ENCODE measurements at regions of chrX and their contacts with region 1.

Region 1: DNA sequence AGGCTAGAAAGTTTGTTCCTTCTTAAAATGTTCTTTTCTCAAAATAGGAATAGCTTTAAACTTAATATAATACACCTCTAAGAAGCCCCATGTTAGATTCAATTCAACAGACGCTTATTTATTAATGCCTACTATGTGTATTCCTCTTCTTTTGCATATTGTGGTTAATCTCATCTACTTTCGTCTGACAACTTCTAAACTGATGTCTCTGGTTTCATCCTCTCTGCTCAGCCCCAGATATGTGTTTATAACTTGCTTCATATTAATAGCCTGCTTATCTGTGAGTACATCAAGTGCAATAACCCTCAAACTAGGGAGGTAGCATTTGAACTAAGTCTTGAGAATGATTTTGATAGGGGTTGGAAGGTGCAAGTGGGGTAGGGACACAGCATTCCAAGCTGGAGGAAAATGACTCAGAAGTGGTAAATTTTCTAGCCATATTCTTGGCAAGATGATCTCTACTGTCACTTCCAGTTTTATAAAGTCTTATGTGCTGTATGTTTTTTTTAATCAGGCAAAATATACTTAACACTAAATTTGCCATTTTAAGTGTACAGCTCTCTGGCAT is 37.0 kb downstream of the STK26 start:
- DNase-seq: no peak
- H3K4me3 ChIP-seq: no peak overlapping the region
- H3K27ac ChIP-seq: no peak overlapping the region
- H3K4me1 ChIP-seq: no peaks in the 10 kb centered on the region
- H3K27me3 ChIP-seq: no peaks in the 10 kb centered on the region
- CTCF ChIP-seq: no peak
- POLR2A ChIP-seq: no peak

Region 2: DNA sequence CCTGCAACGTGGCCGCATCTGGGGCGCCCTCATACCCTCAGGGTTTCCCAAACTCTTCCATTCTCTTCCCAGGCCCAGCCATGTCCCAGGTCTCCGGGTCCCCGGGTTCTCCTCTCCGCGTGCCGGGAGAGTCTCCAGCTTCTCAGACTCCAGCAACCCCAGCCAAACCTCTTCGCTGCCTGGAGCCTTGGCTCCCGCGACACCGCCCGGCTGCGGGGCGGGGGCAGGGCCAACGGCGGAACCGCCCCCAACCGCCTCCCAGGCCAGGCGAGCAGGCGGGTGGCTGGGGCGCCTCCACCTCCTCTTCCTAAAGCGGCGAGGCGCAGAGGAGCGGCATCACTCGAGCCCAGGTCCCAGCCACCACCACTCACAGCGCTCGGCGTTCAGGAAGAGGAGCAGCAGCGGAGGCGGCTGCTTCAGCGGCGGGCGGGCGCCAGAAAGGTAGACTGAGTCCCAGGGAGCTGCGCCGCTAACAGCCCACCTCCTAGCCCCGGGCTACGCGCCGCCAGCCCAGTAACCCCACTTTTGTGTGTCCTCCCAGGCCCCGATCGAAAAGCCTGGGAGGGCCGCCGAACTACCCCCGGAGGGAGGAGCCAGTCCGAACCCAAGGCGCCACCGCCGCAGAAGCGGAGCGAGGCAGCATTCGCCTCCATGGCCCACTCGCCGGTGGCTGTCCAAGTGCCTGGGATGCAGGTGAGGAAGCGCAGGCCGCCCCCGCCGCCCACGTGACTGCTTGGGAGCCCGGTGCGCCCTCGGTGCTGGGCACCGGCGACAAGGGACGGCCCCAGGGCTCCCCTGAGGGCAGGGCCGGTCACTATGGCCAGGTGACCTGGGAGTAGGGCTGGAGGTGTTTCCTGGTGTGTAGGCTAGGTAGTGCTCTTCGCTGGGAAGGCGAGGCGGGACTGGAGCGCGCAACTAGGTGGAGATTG is 36.8 kb before region 1 on chrX and contains the start of gene STK26:
- intact Hi-C with region 1: loop called (anchors 5 kb)
- DNase-seq: peak; percentile 62
- H3K4me3 ChIP-seq: peak within 1 kb of the TSS; percentile 49 to 52
- H3K27ac ChIP-seq: peak within 1 kb of the TSS; percentile 65 to 68
- H3K4me1 ChIP-seq: no peaks in the 10 kb centered on the region
- H3K27me3 ChIP-seq: no peaks in the 10 kb centered on the region
- CTCF ChIP-seq: no peak
- POLR2A ChIP-seq: peak; percentile 83
- total RNA-seq, gene STK26: 11.0 to 12.9 TPM

Region 3: GRCh38 chrX:132442691-132443090 is 382.6 kb after region 1 on chrX:
- intact Hi-C with region 1: no loop called
- DNase-seq: no peak
- H3K4me3 ChIP-seq: no peak overlapping the region
- H3K27ac ChIP-seq: no peak overlapping the region
- H3K4me1 ChIP-seq: no peaks in the 10 kb centered on the region
- H3K27me3 ChIP-seq: no peaks in the 10 kb centered on the region
- CTCF ChIP-seq: no peak
- POLR2A ChIP-seq: no peak

Measured in prostate gland (tissue), 2 donors.